ENCODE measurements at regions of chr3 and their contacts with region 1.

Region 1: DNA sequence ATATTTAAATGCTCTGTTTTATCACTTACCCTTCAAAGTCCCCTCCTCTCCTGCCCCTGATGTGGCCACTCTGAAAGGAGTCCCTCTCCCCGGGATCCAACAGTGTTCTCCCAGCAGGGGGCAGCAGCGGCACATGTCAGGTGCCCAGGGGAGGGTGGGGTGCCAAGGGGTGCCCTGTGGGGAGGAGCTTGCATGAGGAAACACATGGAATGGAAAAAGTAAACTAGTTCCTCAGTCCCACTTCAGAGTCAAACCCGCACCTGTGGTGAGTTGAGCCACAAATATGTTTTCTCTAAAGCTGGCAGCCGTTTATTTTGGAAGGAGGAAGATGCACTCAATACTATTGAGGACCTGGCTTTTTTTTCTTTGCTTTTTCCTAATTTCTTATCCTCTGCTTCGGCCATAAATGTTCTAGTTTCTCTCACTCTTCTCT is 30.1 kb upstream of the NRROS start:
- DNase-seq: peak; percentile 96
- H3K4me3 Mint-ChIP-seq: peak overlapping the region; percentile 45
- H3K27ac Mint-ChIP-seq: peak overlapping the region; percentile 89
- H3K4me1 Mint-ChIP-seq: peaks cover 48% of the 10 kb centered on the region
- H3K27me3 Mint-ChIP-seq: peaks cover 13% of the 10 kb centered on the region

Region 2: GRCh38 chr3:196350067-196350466 is 259.3 kb before region 1 on chr3:
- CTCF ChIA-PET with region 1: no interaction called
- DNase-seq: no peak
- H3K4me3 Mint-ChIP-seq: no peak overlapping the region
- H3K27ac Mint-ChIP-seq: no peak overlapping the region
- H3K4me1 Mint-ChIP-seq: no peaks in the 10 kb centered on the region
- H3K27me3 Mint-ChIP-seq: no peaks in the 10 kb centered on the region

Region 3: DNA sequence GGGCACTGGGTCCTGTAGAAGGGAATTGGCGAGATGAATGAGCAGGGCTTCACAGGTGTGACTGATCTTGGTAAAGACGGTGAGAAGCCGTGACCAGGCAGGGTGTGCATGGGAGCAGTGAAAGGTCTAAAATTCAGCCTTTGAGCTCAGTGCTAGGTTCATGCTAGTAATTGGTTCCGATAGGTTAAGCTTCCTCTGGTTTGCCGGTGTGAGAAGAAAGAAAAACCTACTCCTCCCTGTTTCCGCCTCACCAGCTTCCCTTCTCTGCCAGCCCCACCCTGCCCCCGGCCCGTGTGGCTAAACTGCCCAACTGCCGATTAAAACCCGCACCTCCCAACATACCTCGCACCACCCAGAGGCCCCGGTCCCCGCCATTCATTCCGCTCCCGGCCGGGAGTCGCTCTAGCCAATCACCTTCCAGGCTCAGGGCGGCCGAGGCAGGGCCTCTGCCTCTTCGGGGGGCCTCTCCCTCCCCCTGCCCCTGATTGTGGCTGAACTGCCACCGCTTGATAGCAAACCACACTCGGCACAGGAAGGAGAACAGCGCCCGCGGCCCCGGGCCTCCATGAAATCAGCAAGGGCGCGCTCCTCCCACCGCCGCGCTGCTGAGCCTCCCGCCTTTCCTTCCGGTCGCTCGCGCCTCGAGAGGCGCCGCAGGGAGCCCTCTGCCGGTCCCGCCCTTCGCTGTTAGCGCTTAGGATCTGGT is 22.8 kb after region 1 on chr3:
- CTCF ChIA-PET with region 1: interaction called, 51 read pairs
- DNase-seq: peak; percentile 96
- H3K4me3 Mint-ChIP-seq: peak overlapping the region; percentile 92
- H3K27ac Mint-ChIP-seq: peak overlapping the region; percentile 96
- H3K4me1 Mint-ChIP-seq: peaks cover 66% of the 10 kb centered on the region
- H3K27me3 Mint-ChIP-seq: peaks cover 12% of the 10 kb centered on the region

Region 4: GRCh38 chr3:196677353-196677752 is 68.0 kb after region 1 on chr3:
- CTCF ChIA-PET with region 1: interaction called, 11 read pairs
- DNase-seq: no peak
- H3K4me3 Mint-ChIP-seq: no peak overlapping the region
- H3K27ac Mint-ChIP-seq: no peak overlapping the region
- H3K4me1 Mint-ChIP-seq: peaks cover 26% of the 10 kb centered on the region
- H3K27me3 Mint-ChIP-seq: peaks cover 10% of the 10 kb centered on the region

Region 5: GRCh38 chr3:196684548-196685407 is 75.4 kb after region 1 on chr3:
- CTCF ChIA-PET with region 1: interaction called, 115 read pairs
- DNase-seq: peak; percentile 77
- H3K4me3 Mint-ChIP-seq: peak overlapping the region; percentile 2
- H3K27ac Mint-ChIP-seq: peak overlapping the region; percentile 6
- H3K4me1 Mint-ChIP-seq: peaks cover 20% of the 10 kb centered on the region
- H3K27me3 Mint-ChIP-seq: peaks cover 4% of the 10 kb centered on the region

Region 6: DNA sequence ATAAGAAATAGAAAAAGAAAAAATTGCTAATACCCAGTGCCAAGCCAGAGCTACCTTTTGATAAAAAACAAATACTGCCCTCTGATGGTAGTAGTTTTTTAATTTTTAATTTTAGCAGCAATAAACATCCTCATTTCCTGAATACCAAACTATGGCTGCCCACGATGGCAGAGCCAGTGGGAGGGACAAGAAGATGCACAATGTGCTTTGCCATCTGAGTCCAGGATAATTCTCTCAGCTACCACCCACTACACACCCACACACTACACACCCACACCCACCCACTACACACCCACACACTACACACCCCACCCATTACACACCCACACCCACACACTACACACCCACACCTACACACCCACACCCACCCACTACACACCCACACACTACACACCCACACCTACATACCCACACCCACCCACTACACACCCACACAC is 84.9 kb after region 1 on chr3:
- CTCF ChIA-PET with region 1: interaction called, 19 read pairs
- DNase-seq: no peak
- H3K4me3 Mint-ChIP-seq: no peak overlapping the region
- H3K27ac Mint-ChIP-seq: peak overlapping the region; percentile 14
- H3K4me1 Mint-ChIP-seq: peaks cover 8% of the 10 kb centered on the region
- H3K27me3 Mint-ChIP-seq: peaks cover 15% of the 10 kb centered on the region